Activated CD4-positive, alpha-beta T cell treated with anti-CD3 and anti-CD28 coated beads for 36 hours (primary cell): ENCODE measurements at regions of chr7 and their contacts with region 1.

Region 1: DNA sequence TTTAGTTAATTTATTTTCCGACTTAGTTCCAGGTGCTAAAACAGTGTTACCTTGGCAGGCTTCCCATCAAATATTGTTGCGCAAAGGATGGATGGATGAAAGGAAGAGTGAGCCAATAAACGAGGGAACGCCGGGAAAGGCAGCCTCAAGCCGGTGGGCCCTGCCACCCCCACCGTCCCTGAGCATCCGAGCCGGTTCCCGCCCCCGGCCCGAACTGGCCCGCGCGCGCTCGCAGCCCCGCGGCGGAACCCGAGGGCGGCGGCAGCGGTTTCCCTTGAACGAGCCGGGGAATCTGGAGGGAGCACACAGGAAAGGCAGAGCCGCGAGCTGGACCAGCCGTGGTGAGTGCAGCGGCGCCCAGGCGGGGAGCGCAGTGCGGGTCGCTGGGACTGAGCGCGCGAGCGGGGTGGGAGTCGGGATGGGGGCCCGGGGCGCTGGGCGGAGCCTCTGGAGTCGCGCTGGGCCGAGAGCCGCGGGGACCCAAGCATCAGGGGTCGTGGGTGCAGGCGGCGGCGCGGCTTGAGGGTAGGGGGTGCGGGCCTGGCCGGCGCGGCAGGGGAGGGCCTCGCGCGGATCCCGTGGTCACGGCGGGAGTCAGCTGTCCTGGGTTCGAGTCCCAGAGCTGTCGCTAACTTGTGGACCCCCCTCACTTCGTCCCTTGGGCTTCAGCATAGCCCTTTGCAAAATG is at the start of gene AGK:
- DNase-seq: peak; percentile 87
- ATAC-seq: peak; percentile 95
- H3K4me3 Mint-ChIP-seq: peak within 1 kb of the TSS; percentile 88
- H3K27ac Mint-ChIP-seq: peak within 1 kb of the TSS; percentile 91
- H3K4me1 Mint-ChIP-seq: peaks cover 36% of the 10 kb centered on the region
- H3K27me3 Mint-ChIP-seq: no peaks in the 10 kb centered on the region
- total RNA-seq, gene AGK: 49.7 to 52.9 TPM

Region 2: GRCh38 chr7:139673230-139673629 is 1878.0 kb before region 1 on chr7:
- CTCF ChIA-PET with region 1: no interaction called
- POLR2A ChIA-PET with region 1: no interaction called
- intact Hi-C with region 1: loop called in 1 of 2 experiments (anchors 5 kb)
- DNase-seq: peak; percentile 75
- ATAC-seq: peak; percentile 89
- H3K4me3 Mint-ChIP-seq: peak overlapping the region; percentile 3
- H3K27ac Mint-ChIP-seq: peak overlapping the region; percentile 88
- H3K4me1 Mint-ChIP-seq: peaks cover 56% of the 10 kb centered on the region
- H3K27me3 Mint-ChIP-seq: no peaks in the 10 kb centered on the region

Region 3: DNA sequence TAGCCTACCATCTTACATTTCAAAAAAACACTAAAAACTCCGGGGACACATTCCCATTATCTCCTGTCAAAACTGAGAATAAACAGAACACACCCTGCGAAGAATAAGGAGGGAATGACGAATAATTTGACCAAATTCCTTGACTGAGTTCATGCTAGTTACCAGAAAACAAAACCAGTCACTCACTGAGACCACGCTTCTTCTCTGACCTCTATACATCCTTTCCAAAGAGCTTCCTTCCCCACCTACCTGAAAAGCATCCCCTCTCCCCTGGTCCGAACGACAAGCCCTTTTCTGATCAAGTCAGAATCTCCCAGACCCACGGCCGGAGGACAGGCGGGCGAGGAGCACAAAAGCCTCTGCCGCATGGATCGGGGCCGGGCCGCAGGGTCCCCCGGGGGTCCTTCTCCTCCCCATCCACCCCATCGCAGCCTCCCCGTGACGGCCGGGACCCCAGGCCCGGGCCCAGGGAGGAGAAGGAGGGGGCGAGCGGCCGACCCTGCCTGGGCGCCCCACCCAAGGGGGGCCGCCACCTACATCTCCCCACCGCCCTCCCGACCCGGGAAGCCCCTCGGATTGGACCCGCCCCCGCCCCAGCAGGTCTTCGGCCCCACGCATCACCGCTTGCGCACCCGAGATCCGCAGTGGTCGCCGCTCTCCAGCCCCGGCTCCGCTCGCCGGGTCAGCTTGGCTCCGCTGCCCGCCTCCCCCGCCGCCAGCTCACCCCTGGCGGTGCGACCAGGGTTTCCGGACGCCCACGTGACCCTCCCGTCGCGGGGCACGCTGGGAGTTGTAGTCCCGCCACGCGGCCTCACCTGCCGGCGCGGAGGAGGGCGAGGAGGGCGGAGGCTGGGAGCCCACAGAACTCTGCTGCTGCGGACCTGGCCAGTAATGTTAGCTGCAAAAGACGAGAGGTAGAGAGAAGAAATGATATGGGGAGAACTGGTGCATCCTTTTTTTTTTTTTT is 1153.2 kb before region 1 on chr7 and contains the start of gene SLC37A3:
- CTCF ChIA-PET with region 1: no interaction called
- POLR2A ChIA-PET with region 1: no interaction called
- intact Hi-C with region 1: loop called in 1 of 2 experiments (anchors 10 kb)
- DNase-seq: peak; percentile 94
- ATAC-seq: peak; percentile 86
- H3K4me3 Mint-ChIP-seq: peak within 1 kb of the TSS; percentile 88
- H3K27ac Mint-ChIP-seq: peak within 1 kb of the TSS; percentile 91
- H3K4me1 Mint-ChIP-seq: peaks cover 37% of the 10 kb centered on the region
- H3K27me3 Mint-ChIP-seq: no peaks in the 10 kb centered on the region
- total RNA-seq, gene SLC37A3: 47.5 to 55.5 TPM

Region 4: DNA sequence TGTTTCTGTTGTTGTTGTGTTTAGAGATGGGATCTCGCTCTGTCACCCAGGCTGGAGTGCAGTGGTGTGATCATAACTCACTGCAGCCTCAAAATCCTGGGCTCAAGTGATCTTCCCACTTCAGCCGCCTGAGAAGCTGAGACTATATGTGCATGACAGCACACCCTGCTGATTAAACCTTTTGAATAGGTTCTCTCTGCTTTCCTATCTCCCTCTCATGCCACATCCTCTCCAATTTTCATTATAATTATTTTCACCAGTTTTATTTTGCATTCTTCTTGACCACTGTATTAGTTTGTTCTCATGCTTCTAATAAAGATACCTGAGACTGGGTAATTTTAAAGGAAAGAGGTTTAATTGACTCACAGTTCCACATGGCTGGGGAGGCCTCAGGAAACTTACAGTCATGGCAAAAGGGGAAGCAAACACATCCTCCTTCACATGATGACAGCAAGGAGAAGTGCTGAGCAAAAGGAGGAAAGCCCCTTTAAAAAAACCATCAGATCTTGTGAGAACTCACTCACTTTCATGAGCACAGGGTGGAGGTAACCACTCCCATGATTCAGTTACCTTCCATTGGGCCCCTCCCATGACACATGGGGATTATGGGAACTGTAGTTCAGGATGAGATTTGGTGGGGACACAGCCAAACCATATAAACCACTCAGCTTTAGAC is 12.9 kb after region 1 on chr7:
- CTCF ChIA-PET with region 1: interaction called, 3 read pairs
- POLR2A ChIA-PET with region 1: interaction called, 3 read pairs
- intact Hi-C with region 1: loop called in 1 of 2 experiments (anchors 2 kb)
- DNase-seq: peak; percentile 64
- ATAC-seq: peak; percentile 97
- H3K4me3 Mint-ChIP-seq: no peak overlapping the region
- H3K27ac Mint-ChIP-seq: peak overlapping the region; percentile 73
- H3K4me1 Mint-ChIP-seq: peaks cover 58% of the 10 kb centered on the region
- H3K27me3 Mint-ChIP-seq: no peaks in the 10 kb centered on the region

Region 5: GRCh38 chr7:141701489-141702046 is 150.3 kb after region 1 on chr7:
- CTCF ChIA-PET with region 1: interaction called, 3 read pairs
- POLR2A ChIA-PET with region 1: no interaction called
- intact Hi-C with region 1: loop called in 1 of 2 experiments (anchors 1 kb)
- DNase-seq: peak; percentile 82
- ATAC-seq: peak; percentile 84
- H3K4me3 Mint-ChIP-seq: peak overlapping the region; percentile 77
- H3K27ac Mint-ChIP-seq: peak overlapping the region; percentile 56
- H3K4me1 Mint-ChIP-seq: peaks cover 47% of the 10 kb centered on the region
- H3K27me3 Mint-ChIP-seq: no peaks in the 10 kb centered on the region